Panc1 (cell line): ENCODE measurements at regions of chr3 and their contacts with region 1.

Region 1: DNA sequence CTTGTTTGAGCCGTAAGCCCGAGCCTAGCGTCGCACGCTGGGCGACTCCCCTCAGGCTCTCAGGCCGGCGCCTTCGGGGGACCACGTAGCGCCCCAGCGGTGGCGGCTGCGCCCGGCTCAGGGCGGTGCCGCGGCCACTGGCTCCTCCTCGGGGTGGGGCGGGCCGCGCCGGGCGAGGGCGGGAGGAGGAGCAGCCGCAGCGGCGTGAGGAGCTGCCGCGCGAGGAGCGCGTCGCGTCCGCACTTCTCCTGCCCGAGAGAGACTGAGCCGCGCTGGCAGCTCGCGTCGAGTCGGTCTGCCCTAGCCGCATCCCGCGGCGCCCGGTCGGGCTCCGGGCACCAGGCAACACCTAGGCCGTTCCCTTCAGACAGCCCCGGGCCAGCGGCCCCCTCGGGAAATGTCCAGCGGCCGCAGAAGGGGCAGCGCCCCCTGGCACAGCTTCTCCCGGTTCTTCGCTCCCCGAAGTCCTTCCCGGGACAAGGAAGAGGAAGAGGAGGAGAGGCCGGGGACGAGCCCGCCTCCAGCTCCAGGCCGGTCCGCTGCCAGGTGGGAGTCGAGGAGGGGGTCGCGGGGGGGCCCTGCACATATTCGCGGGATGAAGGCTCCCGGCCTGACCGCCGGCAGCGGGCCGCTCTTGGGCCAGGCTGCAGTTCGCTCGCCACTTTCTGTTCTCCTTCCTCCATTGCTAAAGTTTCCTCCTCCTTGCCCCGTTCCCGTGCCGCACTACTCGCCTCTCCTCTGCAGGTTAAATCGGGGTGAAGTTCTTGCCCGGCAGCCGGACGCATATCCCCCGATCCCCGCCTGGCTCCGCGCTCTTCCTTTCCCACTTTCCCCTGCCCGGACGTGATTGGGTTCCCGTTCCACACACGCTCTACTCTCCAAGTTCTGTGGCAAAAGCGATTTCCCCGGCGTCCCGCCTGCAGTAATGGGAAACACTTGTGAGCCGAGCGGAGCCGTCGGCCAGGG is at the start of gene CRYBG3:
- DNase-seq: peak; percentile 17
- ATAC-seq: peak; percentile 99
- H3K4me3 ChIP-seq: peak within 1 kb of the TSS; percentile 88 to 93
- H3K27ac ChIP-seq: peak within 1 kb of the TSS; percentile 89
- H3K4me1 ChIP-seq: peaks cover 23% of the 10 kb centered on the region
- H3K27me3 ChIP-seq: peaks cover 20% of the 10 kb centered on the region
- CTCF ChIP-seq: peak; percentile 76
- total RNA-seq, gene CRYBG3: 24.6 TPM

Region 2: DNA sequence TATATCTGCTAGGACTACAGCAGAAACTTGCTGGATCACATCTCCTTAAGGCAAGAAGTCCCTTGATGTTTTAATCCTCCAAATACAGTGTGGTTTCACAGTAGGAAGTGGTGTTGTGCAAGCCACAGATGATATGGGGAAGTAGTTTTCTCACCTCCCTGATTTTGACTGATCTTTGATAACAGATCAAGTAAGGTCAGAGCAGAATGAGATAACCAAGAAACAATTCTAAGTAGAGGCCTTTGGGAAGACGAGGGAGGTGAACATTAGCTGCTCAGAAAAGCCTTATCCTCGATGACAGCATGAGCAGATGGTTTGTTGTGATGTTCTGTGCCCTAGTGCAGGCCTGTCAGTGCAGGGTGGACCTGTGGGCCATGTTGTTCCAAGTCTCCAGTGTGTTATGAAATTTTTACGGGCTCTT is 88.8 kb after region 1 on chr3:
- CTCF ChIA-PET with region 1: no interaction called
- POLR2A ChIA-PET with region 1: no interaction called
- in situ Hi-C with region 1: no loop called
- intact Hi-C with region 1: loop called (anchors 10 kb)
- DNase-seq: no peak
- ATAC-seq: peak; percentile 42; the same call in 1 of the 2 replicates
- H3K4me3 ChIP-seq: peak overlapping the region in 1 of 2 experiments; percentile 48; a peak in 1 of 4 replicates
- H3K27ac ChIP-seq: no peak overlapping the region
- H3K4me1 ChIP-seq: peaks cover 17% of the 10 kb centered on the region; the same call in 1 of the 2 replicates
- H3K27me3 ChIP-seq: no peaks in the 10 kb centered on the region
- CTCF ChIP-seq: no peak